A549 (cell line): ENCODE measurements at regions of chr17 and their contacts with region 1.

Region 1: DNA sequence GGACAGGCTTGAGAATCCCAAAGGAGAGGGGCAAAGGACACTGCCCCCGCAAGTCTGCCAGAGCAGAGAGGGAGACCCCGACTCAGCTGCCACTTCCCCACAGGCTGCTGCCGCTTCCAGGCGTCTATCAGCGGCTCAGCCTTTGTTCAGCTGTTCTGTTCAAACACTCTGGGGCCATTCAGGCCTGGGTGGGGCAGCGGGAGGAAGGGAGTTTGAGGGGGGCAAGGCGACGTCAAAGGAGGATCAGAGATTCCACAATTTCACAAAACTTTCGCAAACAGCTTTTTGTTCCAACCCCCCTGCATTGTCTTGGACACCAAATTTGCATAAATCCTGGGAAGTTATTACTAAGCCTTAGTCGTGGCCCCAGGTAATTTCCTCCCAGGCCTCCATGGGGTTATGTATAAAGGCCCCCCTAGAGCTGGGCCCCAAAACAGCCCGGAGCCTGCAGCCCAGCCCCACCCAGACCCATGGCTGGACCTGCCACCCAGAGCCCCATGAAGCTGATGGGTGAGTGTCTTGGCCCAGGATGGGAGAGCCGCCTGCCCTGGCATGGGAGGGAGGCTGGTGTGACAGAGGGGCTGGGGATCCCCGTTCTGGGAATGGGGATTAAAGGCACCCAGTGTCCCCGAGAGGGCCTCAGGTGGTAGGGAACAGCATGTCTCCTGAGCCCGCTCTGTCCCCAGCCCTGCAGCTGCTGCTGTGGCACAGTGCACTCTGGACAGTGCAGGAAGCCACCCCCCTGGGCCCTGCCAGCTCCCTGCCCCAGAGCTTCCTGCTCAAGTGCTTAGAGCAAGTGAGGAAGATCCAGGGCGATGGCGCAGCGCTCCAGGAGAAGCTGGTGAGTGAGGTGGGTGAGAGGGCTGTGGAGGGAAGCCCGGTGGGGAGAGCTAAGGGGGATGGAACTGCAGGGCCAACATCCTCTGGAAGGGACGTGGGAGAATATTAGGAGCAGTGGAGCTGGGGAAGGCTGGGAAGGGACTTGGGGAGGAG is at the start of gene CSF3:
- DNase-seq: no peak
- ATAC-seq: 0 out of 6 replicates have a peak, but pooled peaks have one; percentile 1 to 4
- H3K4me3 ChIP-seq: no peak within 1 kb of the TSS
- H3K27ac ChIP-seq: peak within 1 kb of the TSS; percentile 42 to 46; a peak in 3 of 6 replicates
- H3K4me1 ChIP-seq: peaks cover 17% of the 10 kb centered on the region; the same call in 2 of the 3 replicates
- CTCF ChIP-seq: no peak
- EP300 ChIP-seq: no peak
- POLR2A ChIP-seq: no peak
- RAD21 ChIP-seq: no peak
- polyA plus RNA-seq, gene CSF3: 0.41 TPM in 1 of 2 replicates, not detected in the other

Region 2: DNA sequence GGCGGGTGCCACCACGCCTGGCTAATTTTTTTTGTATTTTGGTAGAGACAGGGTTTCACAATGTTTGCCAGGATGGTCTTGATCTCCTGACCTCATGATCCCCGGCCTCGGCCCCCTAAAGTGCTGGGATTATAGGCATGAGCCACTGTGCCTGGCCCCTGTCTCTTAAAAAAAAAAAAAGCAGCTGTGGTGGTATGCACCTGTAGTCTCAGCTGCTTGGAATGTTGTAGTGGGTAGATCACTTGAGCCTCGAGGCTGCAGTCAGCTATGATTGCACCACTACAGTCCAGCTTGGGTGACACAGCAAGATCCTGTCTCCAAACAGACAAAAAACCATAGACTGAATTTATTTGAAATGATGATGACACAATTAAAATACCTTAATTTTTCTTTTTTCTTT is 529.7 kb before region 1 on chr17:
- CTCF ChIA-PET with region 1: no interaction called
- POLR2A ChIA-PET with region 1: no interaction called
- DNase-seq: peak in 1 of 2 experiments; percentile 84
- ATAC-seq: peak; percentile 91 to 100
- H3K4me3 ChIP-seq: no peak overlapping the region
- H3K27ac ChIP-seq: peak overlapping the region; percentile 78 to 83
- H3K4me1 ChIP-seq: peaks cover 34% of the 10 kb centered on the region
- CTCF ChIP-seq: no peak
- EP300 ChIP-seq: peak in 1 of 2 experiments; percentile 18; a peak in 1 of 5 replicates
- POLR2A ChIP-seq: no peak
- RAD21 ChIP-seq: no peak

Region 3: DNA sequence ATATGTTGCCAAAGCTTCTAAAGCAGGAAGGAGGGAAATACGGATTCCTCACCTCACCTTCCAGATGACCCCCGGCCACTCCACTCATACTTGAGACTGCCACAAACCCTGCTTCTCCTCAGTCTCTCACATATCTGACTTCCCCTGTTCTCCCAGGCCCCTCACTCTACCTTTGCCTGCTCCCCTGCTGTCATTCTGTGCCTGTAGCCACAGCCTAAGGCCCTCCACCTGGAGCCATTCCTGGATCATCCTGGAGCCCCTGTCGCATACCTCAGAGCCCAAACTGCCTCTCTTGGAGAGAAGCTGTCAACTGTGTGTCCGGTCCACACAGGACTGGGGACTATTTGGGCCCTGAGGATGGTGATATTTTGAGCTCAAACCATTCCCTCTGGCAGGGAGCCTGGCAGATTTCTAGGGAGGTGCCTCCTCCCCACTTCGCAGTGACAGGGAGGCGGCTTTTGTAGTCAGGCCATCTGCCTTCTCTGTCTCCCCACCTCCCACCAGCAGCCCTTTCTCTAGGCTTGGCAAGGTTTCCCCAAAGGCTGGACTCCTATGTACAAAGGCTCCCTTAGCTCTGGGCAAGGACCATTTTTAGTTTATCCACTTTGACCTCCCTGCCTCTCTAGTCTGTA is 41.2 kb after region 1 on chr17:
- CTCF ChIA-PET with region 1: interaction called, 10 read pairs
- POLR2A ChIA-PET with region 1: no interaction called
- DNase-seq: no peak
- ATAC-seq: no peak
- H3K4me3 ChIP-seq: no peak overlapping the region
- H3K27ac ChIP-seq: no peak overlapping the region
- H3K4me1 ChIP-seq: peaks cover 12% of the 10 kb centered on the region
- CTCF ChIP-seq: no peak
- EP300 ChIP-seq: no peak
- POLR2A ChIP-seq: no peak
- RAD21 ChIP-seq: no peak

Region 4: GRCh38 chr17:40091691-40092397 is 76.5 kb after region 1 on chr17:
- CTCF ChIA-PET with region 1: interaction called, 102 read pairs
- POLR2A ChIA-PET with region 1: no interaction called
- DNase-seq: no peak
- ATAC-seq: 0 out of 6 replicates have a peak, but pooled peaks have one; percentile 2 to 4
- H3K4me3 ChIP-seq: no peak overlapping the region
- H3K27ac ChIP-seq: peak overlapping the region in 1 of 2 experiments; percentile 18; a peak in 3 of 6 replicates
- H3K4me1 ChIP-seq: peaks cover 21% of the 10 kb centered on the region
- CTCF ChIP-seq: no peak
- EP300 ChIP-seq: no peak
- POLR2A ChIP-seq: no peak
- RAD21 ChIP-seq: no peak

Region 5: DNA sequence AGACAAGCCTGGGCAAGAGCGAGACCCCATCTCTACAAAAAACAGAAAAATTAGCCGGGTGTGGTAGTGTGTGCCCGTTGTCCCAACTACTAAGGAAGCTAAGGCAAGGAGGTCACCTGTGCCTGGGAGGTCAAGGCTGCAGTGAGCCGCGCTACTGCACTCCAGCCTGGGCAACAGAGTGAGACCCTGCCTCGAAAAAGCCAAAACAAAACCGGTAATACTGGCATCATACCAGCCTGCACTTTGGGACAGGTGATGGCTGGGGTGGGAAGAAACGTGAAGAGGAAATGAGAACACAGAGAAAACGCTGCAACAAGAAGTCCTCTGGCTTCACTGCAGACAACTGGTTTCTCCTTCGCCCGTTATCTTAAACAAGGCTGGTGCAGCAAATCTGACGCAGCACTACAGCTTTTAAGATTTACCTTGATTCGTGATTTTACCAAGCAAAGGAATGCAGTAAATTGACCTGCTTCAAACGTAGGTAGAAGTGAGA is 124.3 kb after region 1 on chr17:
- CTCF ChIA-PET with region 1: interaction called, 12 read pairs
- POLR2A ChIA-PET with region 1: no interaction called
- DNase-seq: no peak
- ATAC-seq: peak; percentile 13 to 36
- H3K4me3 ChIP-seq: peak overlapping the region; percentile 58
- H3K27ac ChIP-seq: peak overlapping the region; percentile 91 to 98
- H3K4me1 ChIP-seq: peaks cover 16% of the 10 kb centered on the region; the same call in 2 of the 3 replicates
- CTCF ChIP-seq: no peak
- EP300 ChIP-seq: no peak
- POLR2A ChIP-seq: no peak
- RAD21 ChIP-seq: no peak

Region 6: GRCh38 chr17:40224718-40225550 is 209.6 kb after region 1 on chr17:
- CTCF ChIA-PET with region 1: no interaction called
- POLR2A ChIA-PET with region 1: no interaction called
- DNase-seq: no peak
- ATAC-seq: no peak
- H3K4me3 ChIP-seq: no peak overlapping the region
- H3K27ac ChIP-seq: no peak overlapping the region
- H3K4me1 ChIP-seq: peaks cover 12% of the 10 kb centered on the region; the same call in 2 of the 3 replicates
- CTCF ChIP-seq: no peak
- EP300 ChIP-seq: no peak
- POLR2A ChIP-seq: no peak
- RAD21 ChIP-seq: no peak